Naive thymus-derived CD4-positive, alpha-beta T cell (primary cell): ENCODE measurements at regions of chr15 and their contacts with region 1.

Region 1: GRCh38 chr15:44676676-44677075 is 13.2 kb upstream of the SPG11 start:
- DNase-seq: peak in 1 of 9 donors; percentile 31
- ATAC-seq: peak; percentile 56
- H3K4me3 ChIP-seq: peak overlapping the region; percentile 44
- H3K4me3 Mint-ChIP-seq: peak overlapping the region; percentile 72 to 92 (median 84)
- H3K27ac ChIP-seq: peak overlapping the region; percentile 60
- H3K27ac Mint-ChIP-seq: peak overlapping the region; percentile 89 to 99 (median 96)
- H3K4me1 ChIP-seq: peaks cover 83 to 85% of the 10 kb centered on the region in 2 donors
- H3K4me1 Mint-ChIP-seq: peaks cover 67 to 96% (median 92%) of the 10 kb centered on the region in 7 donors
- H3K27me3 ChIP-seq: no peaks in the 10 kb centered on the region
- H3K27me3 Mint-ChIP-seq: no peaks in the 10 kb centered on the region

Region 2: DNA sequence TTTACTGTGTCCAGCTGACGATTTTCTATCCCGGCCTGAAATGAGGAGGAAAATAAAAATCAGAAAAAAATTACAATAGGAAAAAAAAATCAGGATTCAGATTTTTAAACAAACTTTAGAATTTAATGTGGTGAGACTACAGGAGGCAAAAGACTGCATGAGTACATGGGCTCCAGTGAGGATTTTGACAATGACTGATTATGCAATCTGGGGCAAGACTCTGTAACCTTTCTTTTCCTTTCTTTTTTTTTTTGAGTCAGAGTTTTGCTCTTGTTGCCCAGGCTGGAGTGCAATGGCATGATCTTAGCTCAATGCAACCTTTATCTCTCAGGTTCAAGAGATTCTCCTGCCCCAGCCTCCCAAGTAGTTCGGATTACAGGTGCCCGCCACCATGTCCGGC is 43.1 kb before region 1 on chr15:
- CTCF ChIA-PET with region 1: no interaction called
- POLR2A ChIA-PET with region 1: no interaction called
- intact Hi-C with region 1: no loop called
- DNase-seq: no peak
- ATAC-seq: no peak
- H3K4me3 ChIP-seq: no peak overlapping the region
- H3K4me3 Mint-ChIP-seq: peak overlapping the region in 1 of 10 donors; percentile 51
- H3K27ac ChIP-seq: no peak overlapping the region
- H3K27ac Mint-ChIP-seq: peak overlapping the region in 4 of 9 donors; percentile 48 to 81 (median 56)
- H3K4me1 ChIP-seq: no peaks in the 10 kb centered on the region
- H3K4me1 Mint-ChIP-seq: peaks cover 0 to 11% (median 5%) of the 10 kb centered on the region in 7 donors
- H3K27me3 ChIP-seq: no peaks in the 10 kb centered on the region
- H3K27me3 Mint-ChIP-seq: no peaks in the 10 kb centered on the region

Region 3: GRCh38 chr15:44692659-44693058 is 16.0 kb after region 1 on chr15:
- CTCF ChIA-PET with region 1: interaction called, 6 read pairs
- POLR2A ChIA-PET with region 1: interaction called, 786 read pairs
- intact Hi-C with region 1: loop called in 1 of 2 experiments (anchors 1 kb)
- DNase-seq: no peak
- ATAC-seq: no peak
- H3K4me3 ChIP-seq: no peak overlapping the region
- H3K4me3 Mint-ChIP-seq: peak overlapping the region in 1 of 10 donors; percentile 61
- H3K27ac ChIP-seq: no peak overlapping the region
- H3K27ac Mint-ChIP-seq: peak overlapping the region in 5 of 9 donors; percentile 14 to 79 (median 50)
- H3K4me1 ChIP-seq: peaks cover 0 to 10% of the 10 kb centered on the region in 2 donors
- H3K4me1 Mint-ChIP-seq: peaks cover 23 to 61% (median 50%) of the 10 kb centered on the region in 7 donors
- H3K27me3 ChIP-seq: no peaks in the 10 kb centered on the region
- H3K27me3 Mint-ChIP-seq: peaks cover 0 to 5% (median 0%) of the 10 kb centered on the region in 5 donors

Region 4: GRCh38 chr15:44698641-44699040 is 22.0 kb after region 1 on chr15:
- CTCF ChIA-PET with region 1: interaction called, 4 read pairs
- POLR2A ChIA-PET with region 1: interaction called, 3,822 read pairs
- intact Hi-C with region 1: no loop called
- DNase-seq: no peak
- ATAC-seq: no peak
- H3K4me3 ChIP-seq: no peak overlapping the region
- H3K4me3 Mint-ChIP-seq: no peak overlapping the region
- H3K27ac ChIP-seq: no peak overlapping the region
- H3K27ac Mint-ChIP-seq: peak overlapping the region in 2 of 9 donors; percentile 7 to 65
- H3K4me1 ChIP-seq: no peaks in the 10 kb centered on the region
- H3K4me1 Mint-ChIP-seq: peaks cover 18 to 49% (median 36%) of the 10 kb centered on the region in 7 donors
- H3K27me3 ChIP-seq: no peaks in the 10 kb centered on the region
- H3K27me3 Mint-ChIP-seq: peaks cover 0 to 20% (median 0%) of the 10 kb centered on the region in 5 donors

Region 5: DNA sequence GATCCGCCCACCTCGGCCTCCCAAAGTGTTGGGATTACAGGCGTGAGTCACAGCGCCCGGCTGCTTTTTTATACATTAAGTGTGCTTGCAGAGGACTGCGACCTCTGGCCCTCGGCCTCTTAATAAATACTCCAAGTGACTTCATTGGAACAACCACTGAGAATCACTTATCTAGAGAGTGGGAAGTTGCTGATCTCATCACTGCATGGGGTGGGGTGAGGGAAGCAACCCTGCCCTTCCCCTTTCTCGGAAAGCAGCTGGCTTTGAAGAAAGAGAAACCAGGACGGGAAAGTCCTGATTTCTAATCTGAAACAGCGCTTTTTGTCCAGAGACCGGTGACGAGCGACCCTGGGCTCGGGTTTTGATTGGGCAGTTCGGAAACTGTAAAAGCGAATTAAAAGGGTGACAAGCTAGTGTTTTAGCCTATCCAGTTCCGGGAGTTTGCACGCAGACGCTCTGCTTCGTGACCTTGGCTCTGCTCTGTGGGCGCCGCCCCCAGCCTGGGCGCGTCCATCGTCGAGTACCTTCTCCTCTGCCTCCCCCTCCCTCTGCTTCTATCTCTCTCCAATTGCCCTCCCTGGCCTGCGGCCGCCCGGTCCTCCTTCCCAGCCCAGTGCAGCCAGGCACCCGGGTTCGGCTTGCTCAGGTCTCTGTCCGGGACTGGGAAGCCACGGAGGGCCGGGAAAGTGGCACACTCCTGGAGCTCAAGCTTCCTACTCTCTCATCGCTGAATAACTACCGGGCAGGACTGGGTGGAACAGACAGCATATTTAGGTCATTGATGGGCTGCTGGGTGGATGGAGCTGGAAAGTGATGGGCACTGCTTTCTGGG is 52.1 kb after region 1 on chr15:
- CTCF ChIA-PET with region 1: interaction called, 3 read pairs
- POLR2A ChIA-PET with region 1: interaction called, 3,822 read pairs
- intact Hi-C with region 1: loop called in 1 of 2 experiments (anchors 2 kb)
- DNase-seq: peak; percentile 75 to 97 (median 96)
- ATAC-seq: peak; percentile 88
- H3K4me3 ChIP-seq: peak overlapping the region; percentile 94
- H3K4me3 Mint-ChIP-seq: peak overlapping the region; percentile 87 to 100 (median 99)
- H3K27ac ChIP-seq: peak overlapping the region; percentile 99
- H3K27ac Mint-ChIP-seq: peak overlapping the region; percentile 98 to 100 (median 100)
- H3K4me1 ChIP-seq: peaks cover 52 to 56% of the 10 kb centered on the region in 2 donors
- H3K4me1 Mint-ChIP-seq: peaks cover 54 to 86% (median 77%) of the 10 kb centered on the region in 7 donors
- H3K27me3 ChIP-seq: no peaks in the 10 kb centered on the region
- H3K27me3 Mint-ChIP-seq: peaks cover 0 to 2% (median 0%) of the 10 kb centered on the region in 5 donors